CD4-positive, alpha-beta memory T cell (primary cell): ENCODE measurements at regions of chr5 and their contacts with region 1.

Region 1: DNA sequence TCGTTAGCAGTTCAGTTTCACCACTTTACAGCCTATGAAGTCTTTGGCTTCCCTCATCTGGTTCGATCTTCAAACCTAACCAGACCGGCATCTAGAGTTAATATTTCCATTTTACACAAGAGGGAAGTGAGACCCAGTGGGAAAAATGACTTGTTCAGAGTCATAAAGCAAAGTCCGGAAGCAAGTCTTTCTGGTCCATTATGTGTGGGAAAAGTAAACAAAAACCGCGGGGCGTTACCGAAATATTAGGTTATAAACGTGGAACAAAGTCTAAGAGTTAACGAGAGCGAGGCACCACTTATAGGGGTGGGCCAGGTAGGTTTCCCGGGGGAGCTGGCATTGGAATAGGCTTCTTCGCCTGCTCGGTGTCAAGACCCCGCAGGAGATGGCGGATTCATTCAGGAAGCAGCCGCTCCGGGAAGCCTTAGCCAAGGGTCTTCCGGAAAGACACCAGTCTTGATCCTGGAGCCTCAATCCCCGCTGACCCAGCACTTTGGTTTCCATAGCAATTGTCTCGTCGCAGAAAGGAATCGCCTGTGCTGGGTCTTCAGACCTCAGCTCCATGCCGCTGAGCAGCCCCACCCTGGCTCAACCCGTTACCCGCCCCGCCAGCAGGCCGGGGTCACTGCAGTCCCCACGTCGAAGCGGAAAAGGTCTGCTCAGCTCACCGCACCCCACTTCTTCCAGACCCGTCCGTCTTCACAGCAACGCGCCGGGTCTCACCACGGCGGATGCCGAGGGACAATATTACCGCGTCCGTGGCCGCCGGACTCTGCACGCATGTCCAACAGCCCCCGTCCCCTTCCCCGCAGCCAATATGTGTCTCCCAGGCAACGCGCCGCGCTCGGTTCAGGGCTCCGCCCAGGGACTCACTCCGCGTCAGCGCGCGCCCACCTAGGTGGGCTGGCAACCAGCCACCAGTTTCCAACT is at the start of gene C5orf52:
- DNase-seq: peak in 2 of 5 donors; percentile 21 to 23
- H3K4me3 ChIP-seq: peak within 1 kb of the TSS; percentile 71 to 85
- H3K4me3 Mint-ChIP-seq: peak within 1 kb of the TSS; percentile 87 to 98 (median 92)
- H3K27ac ChIP-seq: peak within 1 kb of the TSS; percentile 3
- H3K27ac Mint-ChIP-seq: peak within 1 kb of the TSS in 6 of 7 donors; percentile 25 to 90 (median 78)
- H3K4me1 ChIP-seq: peaks cover 13% of the 10 kb centered on the region
- H3K4me1 Mint-ChIP-seq: peaks cover 15 to 27% (median 21%) of the 10 kb centered on the region in 4 donors
- H3K27me3 ChIP-seq: no peaks in the 10 kb centered on the region
- H3K27me3 Mint-ChIP-seq: no peaks in the 10 kb centered on the region
- total RNA-seq, gene C5orf52: not detected

Region 2: GRCh38 chr5:157689942-157690689 is 19.2 kb after region 1 on chr5:
- CTCF ChIA-PET with region 1: interaction called, 16 read pairs
- POLR2A ChIA-PET with region 1: interaction called, 6 read pairs
- intact Hi-C with region 1: no loop called
- DNase-seq: peak in 2 of 5 donors; percentile 7 to 29
- H3K4me3 ChIP-seq: no peak overlapping the region
- H3K4me3 Mint-ChIP-seq: no peak overlapping the region
- H3K27ac ChIP-seq: no peak overlapping the region
- H3K27ac Mint-ChIP-seq: no peak overlapping the region
- H3K4me1 ChIP-seq: no peaks in the 10 kb centered on the region
- H3K4me1 Mint-ChIP-seq: no peaks in the 10 kb centered on the region
- H3K27me3 ChIP-seq: no peaks in the 10 kb centered on the region
- H3K27me3 Mint-ChIP-seq: no peaks in the 10 kb centered on the region